Activated naive CD4-positive, alpha-beta T cell treated with anti-CD3 and anti-CD28 coated beads for 36 hours (primary cell): ENCODE measurements at regions of chr1 and their contacts with region 1.

Region 1: DNA sequence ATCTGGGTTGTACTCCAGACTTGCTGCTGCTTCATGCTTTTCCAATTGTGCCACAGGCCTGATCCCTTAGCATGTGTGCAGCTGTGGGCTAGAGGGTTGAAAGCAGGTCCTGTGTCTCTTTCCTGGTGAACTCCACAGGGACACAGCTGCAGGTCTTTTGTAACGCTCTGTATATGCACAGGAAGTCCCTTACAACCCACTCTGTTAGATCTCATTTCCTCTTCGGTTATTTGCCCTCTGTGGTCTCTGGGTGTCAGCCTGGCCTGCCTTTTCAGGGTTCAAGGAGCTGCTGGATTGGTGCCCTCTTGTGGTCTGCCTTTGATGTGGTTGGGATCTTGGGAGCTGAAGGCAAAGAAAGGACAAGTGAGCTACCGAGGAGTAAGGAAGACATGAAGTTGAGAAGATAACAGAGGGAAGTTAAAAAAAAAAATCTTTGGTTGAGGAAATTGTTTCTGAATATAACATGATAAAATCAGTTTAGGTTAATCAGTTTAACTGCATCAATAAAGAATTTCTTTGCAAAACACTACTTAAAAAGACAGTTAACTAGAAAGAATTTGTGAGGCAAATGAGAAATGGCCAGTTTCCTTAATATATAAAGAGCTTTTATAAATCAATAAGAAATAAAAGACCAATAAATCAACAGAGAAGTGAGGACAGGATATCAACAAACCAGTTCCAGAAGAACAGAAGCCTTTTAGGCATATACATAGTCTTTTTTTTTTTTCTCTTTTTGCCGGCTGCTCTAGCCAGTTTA is 44.1 kb downstream of the UCK2 start:
- DNase-seq: peak; percentile 83
- H3K4me3 Mint-ChIP-seq: no peak overlapping the region
- H3K27ac Mint-ChIP-seq: no peak overlapping the region
- H3K4me1 Mint-ChIP-seq: peaks cover 47% of the 10 kb centered on the region
- H3K27me3 Mint-ChIP-seq: peaks cover 1% of the 10 kb centered on the region

Region 2: DNA sequence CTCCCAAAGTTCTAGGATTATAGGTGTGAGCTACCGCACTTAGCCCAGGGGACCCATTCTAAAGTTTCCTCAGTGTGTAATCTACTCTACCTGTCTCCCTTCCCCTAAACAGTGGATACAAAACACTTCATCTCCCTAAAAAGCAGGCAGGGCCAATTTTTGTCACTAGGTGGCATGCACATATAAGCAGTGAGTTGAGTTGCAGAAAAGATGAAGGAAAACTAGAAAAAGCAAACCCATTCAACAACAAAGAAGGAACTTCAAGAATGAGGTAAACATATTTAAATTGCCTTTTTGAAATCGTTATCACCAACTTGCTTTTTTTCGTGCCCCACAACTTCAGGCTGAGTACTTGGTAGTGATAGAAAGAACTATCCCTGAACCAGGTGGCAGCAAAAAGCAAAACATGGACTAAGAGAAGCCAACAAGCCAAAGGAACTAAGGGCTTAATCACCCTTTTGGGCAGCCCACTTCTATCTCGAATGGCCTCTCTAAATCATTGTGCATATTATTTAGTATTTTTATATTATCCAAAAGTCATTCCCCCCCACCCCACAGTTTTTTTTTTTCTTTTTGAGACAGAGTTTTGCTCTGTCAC is 153.5 kb before region 1 on chr1:
- CTCF ChIA-PET with region 1: no interaction called
- intact Hi-C with region 1: loop called (anchors 1 kb)
- DNase-seq: peak; percentile 67
- H3K4me3 Mint-ChIP-seq: no peak overlapping the region
- H3K27ac Mint-ChIP-seq: no peak overlapping the region
- H3K4me1 Mint-ChIP-seq: no peaks in the 10 kb centered on the region
- H3K27me3 Mint-ChIP-seq: no peaks in the 10 kb centered on the region

Region 3: DNA sequence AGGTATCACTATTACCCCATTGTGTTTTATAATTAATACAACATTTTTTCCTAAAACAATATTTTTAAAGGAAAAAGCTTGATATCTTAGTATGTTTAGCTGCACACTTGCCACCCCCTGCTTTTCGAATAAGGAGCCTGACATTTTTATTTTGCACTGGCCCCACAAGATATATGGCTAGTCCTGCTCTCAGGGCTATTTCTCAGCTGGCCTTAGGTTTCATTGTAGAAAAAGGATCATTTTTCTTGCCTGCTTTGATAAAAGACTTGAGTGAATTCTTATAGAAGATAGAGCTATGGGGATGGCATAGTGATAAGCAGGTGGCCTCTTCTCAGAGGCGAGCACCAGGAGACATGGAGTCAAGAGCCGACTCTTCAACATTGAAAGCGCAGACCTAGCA is 128.3 kb after region 1 on chr1:
- CTCF ChIA-PET with region 1: no interaction called
- intact Hi-C with region 1: no loop called
- DNase-seq: no peak
- H3K4me3 Mint-ChIP-seq: no peak overlapping the region
- H3K27ac Mint-ChIP-seq: no peak overlapping the region
- H3K4me1 Mint-ChIP-seq: no peaks in the 10 kb centered on the region
- H3K27me3 Mint-ChIP-seq: peaks cover 2% of the 10 kb centered on the region

Region 4: DNA sequence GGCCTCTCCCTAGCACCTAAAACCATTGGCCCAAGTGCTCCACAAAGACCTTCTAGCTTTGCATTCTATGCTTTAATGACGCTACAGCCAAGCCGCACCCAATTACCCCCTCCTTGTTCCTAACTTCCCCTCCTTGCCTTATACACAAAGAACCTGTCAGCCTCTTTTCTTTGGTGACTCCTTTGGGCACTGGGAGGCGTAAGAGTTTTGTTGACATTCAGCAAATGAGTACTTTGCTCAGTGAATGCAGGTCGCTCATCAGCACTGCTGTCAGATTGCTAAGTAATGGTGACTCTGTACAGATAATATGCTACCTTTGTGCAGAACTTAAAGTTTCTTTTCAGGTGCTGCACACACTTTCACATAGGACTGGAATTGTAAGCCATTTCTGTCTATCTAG is 482.9 kb after region 1 on chr1:
- CTCF ChIA-PET with region 1: no interaction called
- intact Hi-C with region 1: no loop called
- DNase-seq: no peak
- H3K4me3 Mint-ChIP-seq: no peak overlapping the region
- H3K27ac Mint-ChIP-seq: no peak overlapping the region
- H3K4me1 Mint-ChIP-seq: no peaks in the 10 kb centered on the region
- H3K27me3 Mint-ChIP-seq: peaks cover 9% of the 10 kb centered on the region